AG04450 (cell line): ENCODE measurements at regions of chr3 and their contacts with region 1.

Region 1: GRCh38 chr3:71927505-71928066 is 142.6 kb upstream of the PROK2 start:
- DNase-seq: no peak
- H3K4me3 ChIP-seq: no peak overlapping the region
- H3K27ac ChIP-seq: no peak overlapping the region
- H3K27me3 ChIP-seq: peaks cover 17% of the 10 kb centered on the region
- CTCF ChIP-seq: no peak

Region 2: DNA sequence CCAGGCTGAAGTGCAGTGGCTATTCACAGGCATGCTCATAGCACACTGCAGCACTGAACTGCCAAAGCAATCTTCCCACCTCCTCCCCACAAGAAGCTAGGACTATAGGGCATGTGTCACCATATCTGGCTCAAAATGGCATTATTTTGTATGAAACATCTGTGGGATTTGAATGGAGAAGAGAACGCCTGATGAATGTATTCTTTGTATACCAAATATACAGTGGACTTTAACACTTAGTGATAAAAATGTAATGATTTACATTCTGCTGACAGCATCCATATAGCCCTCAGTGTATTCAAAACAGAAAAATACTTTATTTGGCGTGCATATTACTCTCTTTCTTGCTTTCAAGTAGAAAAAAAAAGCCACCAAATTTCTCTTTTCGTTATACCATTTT is 601.9 kb before region 1 on chr3:
- CTCF ChIA-PET with region 1: no interaction called
- POLR2A ChIA-PET with region 1: no interaction called
- DNase-seq: no peak
- H3K4me3 ChIP-seq: no peak overlapping the region
- H3K27ac ChIP-seq: no peak overlapping the region
- H3K27me3 ChIP-seq: no peaks in the 10 kb centered on the region
- CTCF ChIP-seq: no peak

Region 3: GRCh38 chr3:72234391-72234790 is 306.8 kb after region 1 on chr3:
- CTCF ChIA-PET with region 1: no interaction called
- POLR2A ChIA-PET with region 1: no interaction called
- DNase-seq: peak; percentile 30
- H3K4me3 ChIP-seq: no peak overlapping the region
- H3K27ac ChIP-seq: no peak overlapping the region
- H3K27me3 ChIP-seq: peaks cover 32% of the 10 kb centered on the region
- CTCF ChIP-seq: no peak

Region 4: DNA sequence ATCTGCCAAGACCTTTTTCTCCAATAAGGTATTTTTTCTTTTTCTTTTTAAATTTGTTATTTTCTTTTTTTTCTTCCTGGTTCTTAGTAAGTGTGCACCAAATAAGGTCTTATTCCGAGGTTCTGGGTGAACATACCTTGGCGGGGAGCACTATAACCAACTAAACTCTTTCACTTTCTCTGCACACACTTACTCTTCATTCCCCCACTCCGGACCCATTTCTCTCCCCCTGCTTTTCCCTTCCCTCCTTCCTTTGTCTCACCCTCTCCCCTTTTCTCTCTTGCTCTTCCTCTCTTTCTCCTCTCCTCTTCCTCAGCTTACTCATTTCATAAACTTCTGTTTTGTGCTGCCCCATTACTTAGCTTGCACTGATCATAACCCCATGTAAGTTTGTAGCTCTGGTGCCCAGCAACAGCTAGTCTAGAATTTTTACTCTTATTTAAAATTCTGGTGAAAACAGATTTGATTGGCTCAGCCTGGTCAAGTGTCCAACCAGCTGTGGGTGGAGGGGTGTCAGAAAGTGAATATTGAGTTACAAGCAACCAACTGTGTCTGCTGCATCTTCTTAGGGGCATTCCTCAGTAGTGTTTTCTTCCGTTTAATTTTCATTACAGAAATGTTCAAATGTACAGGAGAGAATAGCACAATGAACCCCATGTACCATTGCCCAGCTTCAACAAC is 623.1 kb after region 1 on chr3:
- CTCF ChIA-PET with region 1: interaction called, 13 read pairs
- POLR2A ChIA-PET with region 1: no interaction called
- DNase-seq: no peak
- H3K4me3 ChIP-seq: no peak overlapping the region
- H3K27ac ChIP-seq: no peak overlapping the region
- H3K27me3 ChIP-seq: peaks cover 16% of the 10 kb centered on the region
- CTCF ChIP-seq: no peak